Activated T-helper 2 cell treated with anti-CD3 and anti-CD28 coated beads, Interferon-gamma antibody, Interleukin-2, Interleukin-4, amounts not matched to agents 10 μg/mL and 5 μg/mL and 100 μg/mL, durations not matched to agents 14 hours and 24 hours and 36 hours (primary cell): ENCODE measurements at regions of chr16 and their contacts with region 1.

Region 1: DNA sequence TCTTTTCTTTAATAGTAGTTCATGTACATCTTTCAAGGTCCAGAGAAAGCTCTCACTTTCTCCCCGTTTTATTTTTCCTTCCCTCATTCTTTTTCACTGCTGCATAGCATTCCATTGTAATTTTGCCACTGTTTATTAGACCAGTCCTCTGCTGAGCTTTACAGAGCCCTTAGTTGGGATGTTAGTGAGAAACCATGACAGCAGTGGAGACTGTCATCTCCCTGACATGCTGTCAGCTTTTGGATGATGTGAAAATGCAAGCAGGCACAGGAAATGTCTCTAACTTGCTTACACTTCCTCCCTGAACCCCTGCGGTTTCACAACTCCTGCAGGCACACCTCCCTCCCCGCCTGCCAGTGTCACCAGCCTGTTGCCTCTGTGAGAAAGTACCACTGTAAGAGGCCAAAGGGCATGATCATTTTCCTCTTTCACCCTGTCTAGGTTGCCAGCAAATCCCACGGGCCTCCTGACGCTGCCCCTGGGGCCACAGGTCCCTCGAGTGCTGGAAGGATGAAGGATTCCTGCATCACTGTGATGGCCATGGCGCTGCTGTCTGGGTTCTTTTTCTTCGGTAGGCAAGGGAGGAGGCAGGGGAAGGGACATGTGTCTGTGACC is at the start of gene ITGAL:
- DNase-seq: peak; percentile 83
- H3K4me3 Mint-ChIP-seq: peak within 1 kb of the TSS; percentile 99
- H3K27ac Mint-ChIP-seq: peak within 1 kb of the TSS; percentile 97
- H3K4me1 Mint-ChIP-seq: peaks cover 52% of the 10 kb centered on the region
- H3K27me3 Mint-ChIP-seq: no peaks in the 10 kb centered on the region
- total RNA-seq, gene ITGAL: 292 and 293 TPM in 2 replicates

Region 2: DNA sequence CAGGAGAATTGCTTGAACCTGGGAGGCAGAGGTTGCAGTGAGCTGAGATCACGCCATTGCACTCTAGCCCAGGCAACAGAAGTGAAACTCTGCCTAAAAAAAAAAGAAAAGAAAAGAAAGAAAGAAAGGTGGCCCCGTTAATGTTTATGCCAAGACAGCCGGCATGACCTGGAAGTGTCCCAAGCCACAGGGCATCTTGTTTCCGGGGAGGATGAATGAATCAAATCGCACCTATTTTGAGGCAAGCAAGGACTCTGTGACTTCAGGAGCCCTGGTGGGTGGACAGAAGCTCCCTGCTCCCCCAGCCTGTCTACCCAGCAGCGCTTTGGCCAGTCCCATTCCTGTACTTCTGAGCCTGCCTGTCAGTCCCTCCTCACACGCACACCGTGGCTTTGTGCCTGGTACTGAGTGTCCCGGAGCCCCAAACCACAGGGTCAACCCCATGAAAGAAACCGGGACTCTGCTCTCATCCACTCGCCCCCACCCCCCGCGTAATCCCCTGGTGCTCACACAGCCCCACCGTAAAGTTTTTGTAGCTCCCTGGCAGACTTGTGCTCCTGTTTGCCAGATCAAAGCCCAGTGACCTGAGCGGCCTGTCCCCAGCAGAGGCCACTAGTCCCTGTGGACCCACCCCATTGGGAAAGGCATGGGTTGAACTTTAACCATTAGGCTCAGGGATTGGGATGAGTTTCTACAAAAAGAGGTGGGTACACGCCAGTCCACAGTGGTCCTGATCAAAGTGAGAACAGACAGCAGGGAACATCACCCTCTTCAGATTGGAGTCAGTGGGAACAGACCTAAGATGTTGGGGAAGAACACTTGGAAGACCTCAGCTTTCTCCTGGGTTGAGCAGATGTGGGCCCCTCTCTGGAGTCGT is 136.6 kb before region 1 on chr16:
- intact Hi-C with region 1: no loop called
- DNase-seq: no peak
- H3K4me3 Mint-ChIP-seq: peak overlapping the region; percentile 83
- H3K27ac Mint-ChIP-seq: peak overlapping the region; percentile 73
- H3K4me1 Mint-ChIP-seq: peaks cover 15% of the 10 kb centered on the region
- H3K27me3 Mint-ChIP-seq: no peaks in the 10 kb centered on the region

Region 3: DNA sequence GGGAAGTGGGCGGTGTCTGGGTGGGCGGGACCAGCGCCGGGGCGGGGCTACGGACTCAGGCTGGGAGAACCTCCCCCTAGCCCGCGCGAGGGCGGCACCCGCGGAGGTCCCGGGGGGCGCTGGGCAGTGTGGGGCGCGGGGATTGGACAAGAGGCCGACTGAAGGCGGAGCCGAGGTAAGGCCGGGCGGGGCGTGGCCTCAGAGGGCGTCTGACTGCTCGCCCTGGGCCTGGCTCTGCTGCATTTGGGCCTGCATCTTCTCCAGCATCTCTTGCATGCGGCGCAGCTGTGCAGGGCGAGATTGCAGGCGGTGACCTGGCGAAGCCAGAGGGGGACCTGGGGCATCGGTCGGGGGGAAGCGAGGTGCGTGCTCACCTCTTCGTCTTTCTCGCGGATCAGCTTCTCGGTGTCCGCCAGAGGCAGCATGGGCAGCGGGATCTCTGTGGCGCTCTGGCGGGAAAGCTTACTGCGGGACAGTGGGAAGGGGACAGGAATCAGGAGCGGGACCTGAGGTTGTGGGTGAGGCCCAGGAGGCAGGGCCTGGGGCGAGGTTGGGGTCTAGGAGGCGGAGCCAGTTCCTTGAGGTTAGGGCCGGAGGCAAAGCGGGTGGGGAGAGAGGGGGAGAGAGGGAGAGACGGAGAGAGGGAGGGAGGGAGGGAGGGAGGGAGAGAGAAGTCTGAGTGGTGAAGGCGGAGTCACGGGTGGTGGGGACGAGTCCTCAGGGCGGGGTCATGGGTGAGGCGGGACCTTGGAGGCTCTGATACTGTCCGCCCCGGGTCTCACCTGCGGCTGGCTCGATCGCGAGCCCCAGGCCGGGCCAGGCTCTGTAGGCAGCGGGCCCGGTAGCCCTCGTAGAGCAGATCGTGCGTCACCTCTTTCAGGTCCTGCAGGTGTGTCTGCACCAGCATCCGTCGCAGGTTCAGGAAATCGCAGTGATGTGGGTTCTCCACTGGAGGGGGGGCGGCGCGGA is 93.9 kb before region 1 on chr16:
- intact Hi-C with region 1: loop called (anchors 5 kb)
- DNase-seq: peak; percentile 97
- H3K4me3 Mint-ChIP-seq: peak overlapping the region; percentile 81
- H3K27ac Mint-ChIP-seq: peak overlapping the region; percentile 99
- H3K4me1 Mint-ChIP-seq: peaks cover 37% of the 10 kb centered on the region
- H3K27me3 Mint-ChIP-seq: no peaks in the 10 kb centered on the region

Region 4: DNA sequence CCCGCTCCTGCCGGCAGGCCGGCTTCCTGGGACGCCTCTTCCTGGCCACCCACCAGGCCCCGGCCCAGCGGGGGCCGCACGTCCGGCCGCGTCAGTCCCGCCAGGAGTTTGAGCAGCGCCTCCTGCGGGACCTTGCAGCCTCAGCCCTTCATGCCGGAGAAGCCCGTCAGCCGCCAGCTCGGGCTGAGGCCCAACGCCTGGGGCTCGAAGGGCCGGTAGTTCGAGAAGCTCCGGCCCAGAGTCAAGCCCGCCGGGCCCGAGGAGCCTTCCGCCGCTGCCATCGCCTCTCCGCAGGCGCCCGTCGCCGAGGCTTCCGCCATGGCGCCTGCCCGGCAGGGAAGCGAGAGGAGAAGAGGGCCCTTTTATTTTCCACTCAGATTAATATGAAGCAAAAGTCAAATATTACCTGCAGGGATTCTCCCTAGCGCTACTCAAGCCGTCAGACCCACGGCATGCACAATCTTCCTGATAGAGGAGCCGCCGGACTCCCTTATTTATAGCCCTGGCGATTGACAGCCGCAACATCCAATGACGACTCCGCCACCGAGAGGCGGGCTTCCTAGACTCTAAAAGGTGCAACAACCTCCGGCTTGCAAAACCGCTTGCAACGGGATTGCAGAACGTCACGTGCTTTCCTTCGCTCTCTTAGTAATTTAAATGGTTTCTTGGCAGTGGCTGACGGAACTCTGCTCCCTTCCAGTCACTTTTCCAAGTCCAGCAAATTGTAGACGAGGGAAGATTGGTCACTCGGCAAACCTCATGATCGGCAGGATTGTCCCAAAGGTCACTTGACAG is 26.8 kb before region 1 on chr16 and contains the start of gene SEPHS2:
- intact Hi-C with region 1: loop called (anchors 1 kb)
- DNase-seq: peak; percentile 95
- H3K4me3 Mint-ChIP-seq: peak within 1 kb of the TSS; percentile 88
- H3K27ac Mint-ChIP-seq: peak within 1 kb of the TSS; percentile 94
- H3K4me1 Mint-ChIP-seq: peaks cover 45% of the 10 kb centered on the region
- H3K27me3 Mint-ChIP-seq: no peaks in the 10 kb centered on the region
- total RNA-seq, gene SEPHS2: 82.9 and 84.1 TPM in 2 replicates

Region 5: GRCh38 chr16:30458561-30459394 is 13.7 kb before region 1 on chr16:
- intact Hi-C with region 1: loop called (anchors 1 kb)
- DNase-seq: peak; percentile 91
- H3K4me3 Mint-ChIP-seq: peak overlapping the region; percentile 50
- H3K27ac Mint-ChIP-seq: peak overlapping the region; percentile 96
- H3K4me1 Mint-ChIP-seq: peaks cover 64% of the 10 kb centered on the region
- H3K27me3 Mint-ChIP-seq: no peaks in the 10 kb centered on the region

Region 6: DNA sequence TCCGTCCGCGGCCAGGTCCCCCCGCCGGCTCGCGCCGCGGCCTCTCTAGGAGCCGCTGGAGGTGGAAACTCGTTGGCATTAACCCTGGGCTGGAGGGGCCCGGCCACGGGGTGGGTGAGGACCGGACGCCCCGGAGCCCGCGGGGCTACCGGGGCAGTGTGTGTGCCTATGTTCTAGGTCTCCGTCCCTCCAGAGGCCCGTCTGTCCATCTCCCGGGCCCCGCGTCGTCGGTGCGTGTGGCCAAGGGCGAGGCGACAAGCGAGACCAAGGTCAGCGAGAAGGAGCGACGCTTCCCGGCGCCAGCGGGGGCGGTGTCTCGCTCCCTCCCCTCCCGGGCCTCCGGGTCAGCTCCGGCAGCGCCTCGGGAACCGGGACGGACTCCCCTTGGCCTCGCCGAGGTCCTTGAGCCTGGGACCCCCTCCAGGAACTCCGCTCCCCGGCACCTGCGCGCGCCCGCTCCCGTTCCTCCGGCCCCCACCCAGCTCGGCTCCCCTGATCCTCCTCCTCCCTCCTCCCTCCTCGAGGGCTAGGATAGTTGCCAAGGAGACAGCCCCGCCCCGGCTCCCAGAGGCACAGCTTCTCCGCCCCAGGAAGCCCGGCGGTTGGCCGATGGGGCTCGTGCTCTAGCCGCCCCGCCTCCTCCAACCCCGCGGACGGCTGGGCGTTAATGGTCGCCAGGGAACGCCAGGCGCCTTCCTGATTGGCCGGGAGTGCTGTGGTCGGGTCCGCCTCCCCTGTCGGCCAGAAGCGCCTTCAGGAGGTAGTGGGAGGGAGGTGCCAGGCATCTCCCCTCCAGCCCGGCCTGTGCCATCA is 54.6 kb after region 1 on chr16:
- intact Hi-C with region 1: loop called (anchors 2 kb)
- DNase-seq: peak; percentile 94
- H3K4me3 Mint-ChIP-seq: peak overlapping the region; percentile 84
- H3K27ac Mint-ChIP-seq: peak overlapping the region; percentile 67
- H3K4me1 Mint-ChIP-seq: peaks cover 23% of the 10 kb centered on the region
- H3K27me3 Mint-ChIP-seq: no peaks in the 10 kb centered on the region